ENCODE measurements at regions of chr4 and their contacts with region 1.

Region 1: DNA sequence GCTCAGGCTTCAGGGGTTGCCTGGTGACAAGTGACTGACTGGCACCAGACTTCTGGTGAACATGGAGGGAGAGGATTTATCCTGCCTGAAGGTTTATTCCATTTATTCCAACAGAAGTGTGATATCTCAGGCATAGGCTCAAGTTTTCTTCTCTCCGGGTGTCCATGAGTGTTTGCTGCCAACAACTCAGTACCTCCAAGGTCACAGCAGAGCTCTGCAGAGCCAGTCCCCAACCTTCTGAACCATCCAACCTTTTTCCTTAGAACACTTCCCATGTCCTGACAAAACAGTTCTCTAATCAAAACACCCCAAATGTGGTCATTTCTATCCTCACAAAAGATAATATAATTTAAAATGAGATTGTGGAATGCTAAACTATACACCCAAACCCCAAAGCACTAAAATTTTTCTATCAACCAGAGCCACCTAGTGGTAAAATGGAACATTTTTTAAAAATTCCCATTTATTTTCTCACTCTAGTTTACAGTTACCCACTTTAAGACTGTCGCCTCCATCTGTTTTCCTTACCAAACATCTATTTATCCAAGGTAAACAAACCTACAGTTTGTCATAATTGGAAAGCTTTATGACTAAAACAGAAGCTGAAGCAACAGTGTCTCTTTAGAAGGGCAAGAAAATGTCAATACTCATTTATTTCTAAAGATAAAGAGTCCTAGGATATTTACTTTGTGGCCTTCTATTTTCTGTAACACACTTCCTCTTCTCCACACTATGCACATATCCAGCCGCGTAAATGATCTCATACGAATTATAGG is 39.6 kb downstream of the TMEM154 start:
- DNase-seq: peak in 3 of 14 experiments; percentile 39 to 47 (median 41)
- ATAC-seq: peak; percentile 56
- H3K4me3 ChIP-seq: no peak overlapping the region
- H3K4me3 Mint-ChIP-seq: no peak overlapping the region
- H3K27ac ChIP-seq: no peak overlapping the region
- H3K27ac Mint-ChIP-seq: no peak overlapping the region
- H3K4me1 ChIP-seq: peaks cover 16% of the 10 kb centered on the region
- H3K4me1 Mint-ChIP-seq: peaks cover 22% of the 10 kb centered on the region
- H3K27me3 ChIP-seq: no peaks in the 10 kb centered on the region
- H3K27me3 Mint-ChIP-seq: no peaks in the 10 kb centered on the region
- CTCF ChIP-seq: peak; percentile 87

Region 2: GRCh38 chr4:152408514-152409327 is 231.5 kb before region 1 on chr4:
- CTCF ChIA-PET with region 1: no interaction called
- POLR2A ChIA-PET with region 1: no interaction called
- intact Hi-C with region 1: loop called in 1 of 2 experiments (anchors 5 kb)
- DNase-seq: peak in 4 of 14 experiments; percentile 11 to 67 (median 62)
- ATAC-seq: peak; percentile 46
- H3K4me3 ChIP-seq: no peak overlapping the region
- H3K4me3 Mint-ChIP-seq: no peak overlapping the region
- H3K27ac ChIP-seq: no peak overlapping the region
- H3K27ac Mint-ChIP-seq: no peak overlapping the region
- H3K4me1 ChIP-seq: no peaks in the 10 kb centered on the region
- H3K4me1 Mint-ChIP-seq: peaks cover 26% of the 10 kb centered on the region
- H3K27me3 ChIP-seq: no peaks in the 10 kb centered on the region
- H3K27me3 Mint-ChIP-seq: no peaks in the 10 kb centered on the region
- CTCF ChIP-seq: peak; percentile 64

Region 3: GRCh38 chr4:152454398-152455011 is 185.7 kb before region 1 on chr4:
- CTCF ChIA-PET with region 1: no interaction called
- POLR2A ChIA-PET with region 1: no interaction called
- intact Hi-C with region 1: loop called (anchors 2 kb)
- DNase-seq: peak in 2 of 14 experiments; percentile 17 to 35
- ATAC-seq: peak; percentile 37
- H3K4me3 ChIP-seq: no peak overlapping the region
- H3K4me3 Mint-ChIP-seq: no peak overlapping the region
- H3K27ac ChIP-seq: no peak overlapping the region
- H3K27ac Mint-ChIP-seq: no peak overlapping the region
- H3K4me1 ChIP-seq: no peaks in the 10 kb centered on the region
- H3K4me1 Mint-ChIP-seq: peaks cover 48% of the 10 kb centered on the region
- H3K27me3 ChIP-seq: no peaks in the 10 kb centered on the region
- H3K27me3 Mint-ChIP-seq: no peaks in the 10 kb centered on the region
- CTCF ChIP-seq: peak; percentile 61

Region 4: DNA sequence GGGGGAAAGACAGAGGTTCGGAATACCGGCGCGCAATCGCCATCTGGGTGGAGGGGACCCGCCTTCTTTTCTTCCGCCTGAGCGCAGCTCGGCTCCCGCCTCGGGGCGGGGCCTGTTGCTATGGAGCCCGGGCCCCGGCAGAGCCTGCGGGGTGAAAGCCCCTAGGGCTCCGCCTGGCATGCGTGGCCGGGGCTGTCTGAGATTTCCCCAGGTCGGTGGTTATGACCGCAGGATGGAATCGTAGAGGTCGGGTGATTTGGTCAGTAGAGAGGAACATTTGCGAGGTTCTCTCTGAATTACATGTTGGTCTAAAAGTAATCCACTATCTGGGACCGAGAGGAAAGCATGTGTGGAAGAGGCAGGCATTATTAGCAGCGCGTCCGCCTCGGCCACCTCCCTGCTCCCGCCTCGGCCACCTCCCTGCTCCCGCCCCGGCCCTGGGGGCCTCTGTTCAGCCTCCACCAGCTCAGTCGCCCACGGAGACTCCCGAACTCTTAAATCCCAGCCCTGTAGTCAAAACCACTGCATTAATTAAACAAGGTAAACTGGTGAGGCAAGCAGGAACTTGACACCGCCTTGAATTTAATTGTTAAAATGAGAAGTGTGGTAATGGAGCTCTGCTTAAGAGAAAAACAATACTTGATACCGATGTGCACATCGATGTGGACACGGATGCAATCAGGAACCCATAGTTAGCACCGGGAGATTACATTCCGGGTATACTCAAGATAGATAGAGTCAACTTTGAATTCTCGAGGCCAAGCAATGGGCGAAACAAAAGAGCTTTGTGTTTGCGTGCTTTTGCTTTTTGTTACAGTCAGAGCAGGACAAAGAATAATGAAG is 609.2 kb after region 1 on chr4:
- CTCF ChIA-PET with region 1: no interaction called
- POLR2A ChIA-PET with region 1: no interaction called
- intact Hi-C with region 1: no loop called
- DNase-seq: peak; percentile 67 to 96 (median 82)
- ATAC-seq: peak; percentile 97
- H3K4me3 ChIP-seq: peak overlapping the region; percentile 72
- H3K4me3 Mint-ChIP-seq: peak overlapping the region; percentile 93
- H3K27ac ChIP-seq: peak overlapping the region; percentile 81 to 85
- H3K27ac Mint-ChIP-seq: peak overlapping the region; percentile 85
- H3K4me1 ChIP-seq: peaks cover 20% of the 10 kb centered on the region
- H3K4me1 Mint-ChIP-seq: peaks cover 34% of the 10 kb centered on the region
- H3K27me3 ChIP-seq: no peaks in the 10 kb centered on the region
- H3K27me3 Mint-ChIP-seq: no peaks in the 10 kb centered on the region
- CTCF ChIP-seq: no peak

Measured in CD4-positive, alpha-beta T cell (primary cell).